PC-3 (cell line): ENCODE measurements at regions of chr4 and their contacts with region 1.

Region 1: GRCh38 chr4:170491981-170492380 is 402.2 kb upstream of the AADAT start:
- DNase-seq: no peak
- ATAC-seq: no peak
- H3K4me3 ChIP-seq: no peak overlapping the region
- H3K27ac ChIP-seq: no peak overlapping the region
- H3K4me1 ChIP-seq: no peaks in the 10 kb centered on the region
- H3K27me3 ChIP-seq: no peaks in the 10 kb centered on the region
- CTCF ChIP-seq: no peak

Region 2: DNA sequence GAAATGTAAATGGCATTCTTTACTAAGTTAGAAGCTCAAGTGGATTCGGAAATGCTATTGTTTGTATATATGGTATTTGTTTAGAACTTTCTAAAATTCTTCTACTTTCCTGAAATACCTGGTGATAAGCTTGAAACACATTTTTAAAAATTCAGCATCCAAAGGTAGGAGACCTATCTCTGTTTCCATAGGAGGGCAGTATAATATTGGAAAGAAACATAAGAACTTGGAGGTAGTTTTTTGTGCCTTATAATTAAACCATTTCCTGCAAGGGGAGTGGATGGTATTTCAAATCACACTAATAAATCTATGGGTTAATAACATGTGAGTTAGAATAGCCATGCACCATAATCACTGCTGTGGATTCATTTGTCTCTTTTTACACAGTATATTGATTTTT is 184.8 kb before region 1 on chr4:
- CTCF ChIA-PET with region 1: no interaction called
- POLR2A ChIA-PET with region 1: no interaction called
- intact Hi-C with region 1: loop called (anchors 2 kb)
- DNase-seq: no peak
- ATAC-seq: no peak
- H3K4me3 ChIP-seq: no peak overlapping the region
- H3K27ac ChIP-seq: no peak overlapping the region
- H3K4me1 ChIP-seq: peaks cover 14% of the 10 kb centered on the region; the same call in 1 of the 2 replicates
- H3K27me3 ChIP-seq: no peaks in the 10 kb centered on the region
- CTCF ChIP-seq: peak; percentile 43

Region 3: DNA sequence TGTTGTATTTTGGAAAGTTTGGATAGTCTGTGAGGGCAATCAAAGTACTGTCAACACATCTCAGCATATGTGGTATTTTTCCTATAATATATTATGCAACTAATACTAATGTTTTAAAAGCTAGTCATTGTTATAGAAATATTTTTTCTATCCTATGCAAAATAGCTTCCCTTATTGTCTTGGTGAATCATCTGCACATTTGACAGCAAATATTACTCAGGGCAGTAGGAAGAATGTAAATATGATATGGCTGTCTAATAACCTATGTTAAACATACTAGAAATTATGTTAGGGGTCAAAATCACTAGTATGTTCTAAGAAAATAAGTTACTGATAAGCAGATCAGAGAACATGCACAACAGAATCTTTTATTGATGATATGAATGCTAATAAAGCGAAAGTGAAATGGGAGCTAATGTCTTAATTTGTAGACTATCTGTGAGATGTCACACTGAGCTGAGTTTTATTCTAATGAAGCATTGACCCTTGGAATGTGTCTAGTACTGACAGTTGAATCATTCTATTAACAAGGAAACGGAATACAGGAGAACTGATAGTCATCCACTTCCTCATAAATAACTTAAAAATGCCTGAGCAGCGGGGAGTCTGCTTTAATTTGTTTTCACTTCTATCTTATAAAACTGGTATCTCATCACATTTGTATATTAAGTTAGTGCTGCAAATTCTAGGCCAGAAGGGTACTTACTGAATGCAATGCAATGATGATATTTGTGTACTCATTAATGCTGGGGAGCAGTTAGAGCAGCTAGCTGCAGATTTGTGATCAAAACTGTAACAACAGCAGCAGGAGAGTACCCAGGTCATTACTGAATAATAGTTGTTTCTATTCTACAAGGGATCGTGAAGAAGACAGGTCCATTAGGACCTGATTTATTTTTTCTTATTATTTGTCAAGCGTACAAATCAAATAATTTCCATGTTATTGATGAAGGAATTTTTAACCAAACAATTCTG is 38.1 kb after region 1 on chr4:
- CTCF ChIA-PET with region 1: no interaction called
- POLR2A ChIA-PET with region 1: no interaction called
- intact Hi-C with region 1: no loop called
- DNase-seq: peak; percentile 45
- ATAC-seq: peak; percentile 35
- H3K4me3 ChIP-seq: peak overlapping the region; percentile 12; the same call in 1 of the 2 replicates
- H3K27ac ChIP-seq: peak overlapping the region; percentile 29; the same call in 1 of the 2 replicates
- H3K4me1 ChIP-seq: peaks cover 39% of the 10 kb centered on the region
- H3K27me3 ChIP-seq: no peaks in the 10 kb centered on the region
- CTCF ChIP-seq: no peak

Region 4: DNA sequence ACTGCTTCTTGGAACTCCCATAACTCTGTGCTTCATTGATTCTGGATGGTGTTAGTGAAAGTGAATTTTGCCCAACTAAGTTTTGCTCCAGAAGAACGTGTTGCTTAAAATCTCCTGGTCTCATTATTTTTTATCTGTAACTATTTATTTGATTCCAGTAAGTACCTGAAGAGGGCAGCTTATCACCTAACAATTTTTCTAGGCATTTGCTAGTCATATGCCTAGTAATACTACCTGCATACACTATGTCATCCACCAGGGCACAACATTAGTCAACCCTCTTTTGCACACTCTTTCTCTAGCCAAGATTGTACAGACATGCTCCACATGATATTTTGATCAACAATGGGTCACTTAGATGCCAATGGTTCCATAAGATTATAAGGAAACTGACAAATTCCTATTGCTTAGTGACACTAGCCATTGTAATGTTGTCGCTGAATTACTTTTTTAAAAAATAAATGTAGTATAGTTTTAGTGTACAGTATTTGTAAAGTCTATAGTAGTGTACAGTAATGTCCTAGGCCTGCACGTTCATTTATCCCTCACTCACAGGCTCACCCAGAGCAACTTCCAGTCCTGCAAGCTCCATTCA is 97.7 kb after region 1 on chr4:
- CTCF ChIA-PET with region 1: no interaction called
- POLR2A ChIA-PET with region 1: no interaction called
- intact Hi-C with region 1: no loop called
- DNase-seq: peak; percentile 68
- ATAC-seq: peak; percentile 40; the same call in 1 of the 2 replicates
- H3K4me3 ChIP-seq: no peak overlapping the region
- H3K27ac ChIP-seq: no peak overlapping the region
- H3K4me1 ChIP-seq: no peaks in the 10 kb centered on the region
- H3K27me3 ChIP-seq: no peaks in the 10 kb centered on the region
- CTCF ChIP-seq: no peak; the same call in 1 of the 2 replicates

Region 5: DNA sequence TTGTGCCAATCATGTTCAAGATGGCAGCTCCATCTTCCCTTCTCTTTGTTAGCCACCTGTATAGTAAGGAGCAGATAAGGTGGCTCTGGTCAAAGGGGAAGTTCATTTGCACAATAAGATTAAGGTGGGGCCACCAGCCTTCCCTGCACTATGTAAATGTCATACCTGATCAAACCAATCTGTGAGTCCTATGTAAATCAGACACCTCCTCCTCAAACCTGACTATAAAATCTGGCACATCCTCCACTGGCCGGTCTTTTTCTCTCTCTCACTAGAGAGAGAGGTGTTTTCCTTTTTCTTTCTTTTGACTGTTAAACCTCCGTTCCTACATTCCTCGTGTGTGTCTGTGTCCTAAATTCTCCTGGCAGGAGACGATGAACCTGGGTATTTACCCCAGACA is 170.3 kb after region 1 on chr4:
- CTCF ChIA-PET with region 1: no interaction called
- POLR2A ChIA-PET with region 1: no interaction called
- intact Hi-C with region 1: no loop called
- DNase-seq: no peak
- ATAC-seq: no peak
- H3K4me3 ChIP-seq: no peak overlapping the region
- H3K27ac ChIP-seq: no peak overlapping the region
- H3K4me1 ChIP-seq: no peaks in the 10 kb centered on the region
- H3K27me3 ChIP-seq: no peaks in the 10 kb centered on the region
- CTCF ChIP-seq: no peak